Gastrocnemius medialis (tissue), 4 donors: ENCODE measurements at regions of chr7 and their contacts with region 1.

Region 1: GRCh38 chr7:140062528-140063299 is at the start of gene PARP12:
- DNase-seq: peak; percentile 69 to 80
- ATAC-seq: peak; percentile 73 to 84
- H3K4me3 ChIP-seq: peak within 1 kb of the TSS; percentile 62 to 84 (median 72)
- H3K27ac ChIP-seq: peak within 1 kb of the TSS; percentile 71 to 80 (median 78)
- H3K4me1 ChIP-seq: peaks cover 0 to 6% of the 10 kb centered on the region in 2 donors
- H3K27me3 ChIP-seq: no peaks in the 10 kb centered on the region
- CTCF ChIP-seq: no peak
- POLR2A ChIP-seq: peak; percentile 15 to 43
- total RNA-seq, gene PARP12: 4.3 to 12.7 (median 4.9) TPM

Region 2: DNA sequence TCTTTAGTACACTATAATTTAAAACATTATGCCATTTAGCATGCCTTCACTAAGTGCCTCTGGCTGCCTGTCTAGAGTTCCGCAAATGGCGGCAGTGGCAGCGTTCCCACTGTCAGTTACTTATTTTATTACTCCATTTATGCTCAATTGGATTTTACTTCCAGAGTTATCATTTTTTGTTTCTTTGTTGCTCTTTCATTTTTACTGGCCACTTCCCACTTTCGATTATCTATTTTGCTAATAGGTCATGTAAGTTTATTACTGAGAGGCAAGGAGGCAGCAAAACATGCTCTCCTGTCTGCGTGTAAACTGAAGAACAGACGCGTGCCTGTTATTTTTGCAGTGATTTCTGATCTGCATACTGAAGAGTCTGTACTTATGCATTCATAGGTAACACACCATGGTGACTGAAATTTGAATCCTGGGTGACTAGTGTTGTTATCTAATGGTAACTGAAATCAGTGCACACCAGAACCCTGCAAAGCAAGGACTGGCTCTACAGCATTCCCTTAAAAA is 91.0 kb after region 1 on chr7:
- in situ Hi-C with region 1: no loop called
- intact Hi-C with region 1: loop called (anchors 5 kb)
- DNase-seq: peak in 1 of 2 donors; percentile 32
- ATAC-seq: peak in 1 of 2 donors; percentile 67
- H3K4me3 ChIP-seq: no peak overlapping the region
- H3K27ac ChIP-seq: peak overlapping the region; percentile 70 to 90 (median 79)
- H3K4me1 ChIP-seq: peaks cover 79 to 83% of the 10 kb centered on the region in 2 donors
- H3K27me3 ChIP-seq: no peaks in the 10 kb centered on the region
- CTCF ChIP-seq: no peak
- POLR2A ChIP-seq: peak in 1 of 2 donors; percentile 52

Region 3: GRCh38 chr7:140326116-140326928 is 263.6 kb after region 1 on chr7:
- in situ Hi-C with region 1: no loop called
- intact Hi-C with region 1: loop called (anchors 10 kb)
- DNase-seq: peak; percentile 42 to 43
- ATAC-seq: peak; percentile 82 to 87
- H3K4me3 ChIP-seq: peak overlapping the region in 1 of 4 donors; percentile 20
- H3K27ac ChIP-seq: no peak overlapping the region
- H3K4me1 ChIP-seq: peaks cover 0 to 3% of the 10 kb centered on the region in 2 donors
- H3K27me3 ChIP-seq: no peaks in the 10 kb centered on the region
- CTCF ChIP-seq: peak in 4 of 5 experiments; percentile 33 to 63 (median 51)
- POLR2A ChIP-seq: no peak

Region 4: GRCh38 chr7:141387521-141388217 is 1325.0 kb after region 1 on chr7:
- in situ Hi-C with region 1: no loop called
- intact Hi-C with region 1: no loop called
- DNase-seq: no peak
- ATAC-seq: no peak
- H3K4me3 ChIP-seq: no peak overlapping the region
- H3K27ac ChIP-seq: no peak overlapping the region
- H3K4me1 ChIP-seq: no peaks in the 10 kb centered on the region
- H3K27me3 ChIP-seq: no peaks in the 10 kb centered on the region
- CTCF ChIP-seq: no peak
- POLR2A ChIP-seq: no peak